ENCODE measurements at regions of chr20 and their contacts with region 1.

Region 1: DNA sequence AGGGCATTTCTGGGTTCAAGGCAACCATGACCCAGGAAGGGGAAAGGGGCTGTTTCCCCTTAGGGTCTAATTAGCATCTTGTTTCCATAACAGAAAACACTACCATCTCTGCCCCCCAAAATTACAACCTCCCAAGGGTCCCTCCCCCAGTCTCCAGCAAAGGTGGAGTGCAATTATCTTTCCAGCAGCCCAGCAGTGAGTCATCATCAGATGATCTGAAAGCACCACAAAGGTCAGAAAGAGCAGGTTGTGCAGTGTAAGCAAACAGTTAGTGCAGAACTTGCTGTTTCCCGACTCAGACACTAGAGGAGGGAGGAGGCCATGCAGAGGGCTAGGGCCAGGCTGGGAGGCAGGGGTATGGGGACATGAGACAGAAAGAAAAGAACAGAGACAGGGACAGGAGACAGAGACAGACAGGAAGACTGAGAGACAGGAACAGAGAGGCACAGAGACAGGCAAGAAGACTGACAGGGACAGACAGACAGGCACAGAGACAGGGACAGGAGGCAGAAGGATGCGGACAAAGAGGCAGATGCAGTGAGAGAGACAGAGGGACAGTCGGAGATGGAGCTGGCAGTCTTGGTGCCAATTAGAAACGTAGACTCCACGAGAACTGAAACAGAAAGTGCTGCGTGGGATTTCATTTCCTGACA is 62.5 kb downstream of the PYGB start:
- DNase-seq: peak; percentile 83
- H3K4me3 ChIP-seq: peak overlapping the region in 1 of 3 experiments; percentile 20
- H3K27ac ChIP-seq: peak overlapping the region; percentile 23
- H3K4me1 ChIP-seq: peaks cover 25% of the 10 kb centered on the region
- H3K27me3 ChIP-seq: no peaks in the 10 kb centered on the region
- CTCF ChIP-seq: peak; percentile 84 to 87

Region 2: GRCh38 chr20:25065625-25066338 is 244.6 kb before region 1 on chr20:
- CTCF ChIA-PET with region 1: no interaction called
- dilution Hi-C with region 1: no loop called
- in situ Hi-C with region 1: loop called in 1 of 2 experiments (anchors 25 kb)
- intact Hi-C with region 1: no loop called
- DNase-seq: peak; percentile 44
- H3K4me3 ChIP-seq: no peak overlapping the region
- H3K27ac ChIP-seq: no peak overlapping the region
- H3K4me1 ChIP-seq: no peaks in the 10 kb centered on the region
- H3K27me3 ChIP-seq: peaks cover 16% of the 10 kb centered on the region
- CTCF ChIP-seq: peak; percentile 82 to 84

Region 3: GRCh38 chr20:25254986-25255680 is 55.3 kb before region 1 on chr20:
- CTCF ChIA-PET with region 1: no interaction called
- dilution Hi-C with region 1: no loop called
- in situ Hi-C with region 1: loop called in 1 of 2 experiments (anchors 5 kb)
- intact Hi-C with region 1: no loop called
- DNase-seq: peak; percentile 35
- H3K4me3 ChIP-seq: no peak overlapping the region
- H3K27ac ChIP-seq: no peak overlapping the region
- H3K4me1 ChIP-seq: peaks cover 46% of the 10 kb centered on the region
- H3K27me3 ChIP-seq: no peaks in the 10 kb centered on the region
- CTCF ChIP-seq: peak in 1 of 2 donors; percentile 23

Region 4: GRCh38 chr20:25372584-25373336 is 62.4 kb after region 1 on chr20:
- CTCF ChIA-PET with region 1: no interaction called
- dilution Hi-C with region 1: loop called (anchors 5 kb)
- in situ Hi-C with region 1: no loop called
- intact Hi-C with region 1: no loop called
- DNase-seq: peak; percentile 93
- H3K4me3 ChIP-seq: no peak overlapping the region
- H3K27ac ChIP-seq: no peak overlapping the region
- H3K4me1 ChIP-seq: peaks cover 5% of the 10 kb centered on the region
- H3K27me3 ChIP-seq: no peaks in the 10 kb centered on the region
- CTCF ChIP-seq: no peak

Region 5: GRCh38 chr20:25539742-25540672 is 229.6 kb after region 1 on chr20:
- CTCF ChIA-PET with region 1: no interaction called
- dilution Hi-C with region 1: no loop called
- in situ Hi-C with region 1: loop called in 1 of 2 experiments (anchors 25 kb)
- intact Hi-C with region 1: no loop called
- DNase-seq: peak; percentile 14
- H3K4me3 ChIP-seq: peak overlapping the region; percentile 4 to 29 (median 23)
- H3K27ac ChIP-seq: peak overlapping the region; percentile 6
- H3K4me1 ChIP-seq: peaks cover 16% of the 10 kb centered on the region
- H3K27me3 ChIP-seq: no peaks in the 10 kb centered on the region
- CTCF ChIP-seq: peak; percentile 34 to 74

Region 6: DNA sequence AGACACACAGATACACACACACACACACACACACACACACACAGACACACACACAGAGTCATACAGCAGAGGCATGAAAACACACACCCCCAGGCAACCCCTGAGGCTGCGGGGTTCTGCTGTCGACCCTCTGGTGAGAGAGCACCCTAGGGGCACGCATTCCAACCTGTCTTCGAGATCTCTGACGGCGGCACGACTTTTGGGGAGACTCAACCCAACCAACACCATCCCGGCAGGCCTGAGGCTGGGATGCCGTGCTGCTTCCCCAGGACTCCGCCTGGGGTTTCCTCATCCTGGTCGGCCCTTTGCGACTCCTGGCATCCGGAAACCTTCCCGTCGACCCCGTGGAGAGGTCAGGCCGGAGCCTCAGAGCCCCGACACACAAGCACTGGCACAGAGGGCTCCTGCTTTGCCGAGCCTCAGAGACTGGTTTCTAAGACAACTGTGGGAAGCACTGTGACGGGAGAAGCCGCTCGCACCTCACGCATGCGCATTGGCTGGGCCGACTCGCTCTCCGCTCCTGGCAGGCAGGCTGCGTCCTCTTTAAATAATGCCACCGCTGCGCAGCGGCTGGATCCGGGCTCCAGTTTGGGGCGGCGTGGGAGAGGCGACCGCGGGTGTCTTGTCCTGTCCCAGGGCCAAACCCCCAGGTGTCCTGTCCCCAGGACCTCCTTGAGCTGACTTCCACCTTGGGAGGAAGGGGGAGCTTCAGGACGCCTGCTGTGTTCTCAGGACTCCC is 555.2 kb after region 1 on chr20:
- CTCF ChIA-PET with region 1: no interaction called
- dilution Hi-C with region 1: no loop called
- in situ Hi-C with region 1: loop called in 1 of 2 experiments (anchors 25 kb)
- intact Hi-C with region 1: no loop called
- DNase-seq: peak; percentile 65
- H3K4me3 ChIP-seq: peak overlapping the region; percentile 24 to 45 (median 40)
- H3K27ac ChIP-seq: no peak overlapping the region
- H3K4me1 ChIP-seq: peaks cover 20% of the 10 kb centered on the region
- H3K27me3 ChIP-seq: no peaks in the 10 kb centered on the region
- CTCF ChIP-seq: no peak

Measured in mammary epithelial cell (primary cell).